ENCODE measurements at regions of chr14 and their contacts with region 1.

Region 1: DNA sequence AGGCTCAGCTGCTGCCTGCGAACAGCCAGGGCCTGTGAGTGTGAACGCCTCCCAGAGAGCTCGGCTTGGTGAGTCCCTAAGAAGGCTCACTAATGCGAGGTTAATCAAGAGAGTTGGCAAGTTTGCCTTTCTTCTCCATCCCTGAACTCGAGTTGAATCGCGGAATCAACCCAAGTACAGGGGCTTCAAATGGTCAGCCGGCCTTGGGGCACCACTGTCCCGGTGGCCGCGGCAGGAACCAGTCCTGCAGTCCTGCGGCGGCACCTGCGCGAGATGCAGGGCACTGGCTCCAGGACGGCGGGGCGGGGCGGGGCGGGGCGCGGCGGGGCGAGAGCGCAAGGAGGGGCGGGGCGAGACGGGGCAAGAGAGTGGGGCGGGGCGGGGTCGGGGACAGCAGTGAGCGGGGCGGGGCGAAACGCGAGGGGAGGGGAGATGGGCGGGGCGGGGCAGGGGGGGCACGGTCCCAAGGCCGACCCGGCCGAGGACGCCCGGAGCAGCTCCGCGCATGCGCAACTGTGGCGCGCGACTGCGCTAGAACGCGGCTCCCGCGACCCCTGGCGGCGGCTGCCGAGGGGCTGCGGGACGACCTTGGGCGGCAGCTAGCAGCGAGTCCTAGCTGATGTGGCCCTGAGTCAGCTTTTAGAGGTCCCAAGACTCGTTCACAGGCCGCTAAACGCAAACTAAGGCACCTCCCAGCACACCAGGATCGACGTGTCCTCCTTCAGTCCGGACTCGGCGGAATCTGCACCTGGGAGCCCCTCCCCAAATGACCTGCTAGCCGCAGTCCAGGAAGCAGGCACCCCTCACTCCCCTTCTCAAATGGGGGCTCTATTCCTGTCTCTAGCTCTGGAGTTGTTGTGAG is 58.0 kb downstream of the TTC7B start:
- DNase-seq: peak; percentile 96
- ATAC-seq: peak; percentile 85
- H3K4me3 ChIP-seq: peak overlapping the region; percentile 59 to 77 (median 66)
- H3K4me3 Mint-ChIP-seq: peak overlapping the region; percentile 82
- H3K27ac ChIP-seq: peak overlapping the region; percentile 71 to 79
- H3K27ac Mint-ChIP-seq: peak overlapping the region; percentile 66
- H3K4me1 ChIP-seq: peaks cover 22 to 29% of the 10 kb centered on the region in 2 donors
- H3K4me1 Mint-ChIP-seq: peaks cover 20% of the 10 kb centered on the region
- H3K27me3 ChIP-seq: no peaks in the 10 kb centered on the region
- H3K27me3 Mint-ChIP-seq: peaks cover 3% of the 10 kb centered on the region
- CTCF ChIP-seq: peak; percentile 78

Region 2: GRCh38 chr14:89701211-89702043 is 1056.8 kb before region 1 on chr14:
- CTCF ChIA-PET with region 1: no interaction called
- POLR2A ChIA-PET with region 1: no interaction called
- intact Hi-C with region 1: loop called (anchors 5 kb)
- DNase-seq: peak; percentile 90
- ATAC-seq: peak; percentile 96
- H3K4me3 ChIP-seq: peak overlapping the region; percentile 4 to 80 (median 62)
- H3K4me3 Mint-ChIP-seq: peak overlapping the region; percentile 88
- H3K27ac ChIP-seq: peak overlapping the region; percentile 28 to 71
- H3K27ac Mint-ChIP-seq: peak overlapping the region; percentile 85
- H3K4me1 ChIP-seq: peaks cover 25% of the 10 kb centered on the region in 2 donors
- H3K4me1 Mint-ChIP-seq: peaks cover 25% of the 10 kb centered on the region
- H3K27me3 ChIP-seq: no peaks in the 10 kb centered on the region
- H3K27me3 Mint-ChIP-seq: no peaks in the 10 kb centered on the region
- CTCF ChIP-seq: no peak

Region 3: DNA sequence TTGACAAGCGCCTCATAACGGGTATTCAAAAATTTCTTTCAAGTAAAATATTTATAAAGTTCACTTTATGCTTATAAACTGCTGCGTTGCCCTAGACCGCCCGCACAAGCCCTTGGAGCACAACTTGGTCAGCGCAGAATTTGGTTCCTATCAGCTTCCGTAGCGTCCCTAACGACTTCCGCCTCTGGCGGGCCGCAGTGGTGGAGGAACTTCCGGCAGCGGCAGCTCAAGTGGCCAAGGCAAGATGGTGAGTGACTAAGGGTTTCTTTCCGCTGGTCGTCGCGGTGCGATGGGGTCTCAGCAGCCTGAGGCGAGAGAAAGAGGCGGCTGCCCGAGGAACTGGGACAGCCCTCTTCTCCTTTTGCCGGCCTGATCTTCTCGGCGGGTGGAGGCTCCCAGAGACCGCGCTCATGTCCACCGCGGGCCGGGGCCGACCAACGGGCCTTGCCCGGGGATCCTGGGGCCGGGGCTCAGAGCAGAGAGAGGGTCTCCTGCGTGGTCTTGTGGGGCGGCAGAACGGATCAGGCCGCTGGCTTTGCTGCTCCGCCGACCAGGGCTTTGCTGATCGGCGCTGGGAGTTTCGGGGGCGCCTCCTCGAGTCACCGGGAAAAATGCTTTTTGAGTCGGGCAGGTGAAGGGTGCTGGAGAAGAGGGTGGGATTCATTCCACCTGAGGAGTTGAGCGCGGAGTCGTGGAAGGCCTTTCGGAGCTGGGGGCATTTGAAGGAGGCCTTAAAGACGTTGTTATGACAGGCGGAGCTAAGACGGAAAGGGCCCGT is 501.7 kb before region 1 on chr14 and contains the start of gene PSMC1:
- CTCF ChIA-PET with region 1: no interaction called
- POLR2A ChIA-PET with region 1: no interaction called
- intact Hi-C with region 1: loop called (anchors 1 kb)
- DNase-seq: peak; percentile 89
- ATAC-seq: peak; percentile 94
- H3K4me3 ChIP-seq: peak within 1 kb of the TSS; percentile 75 to 92 (median 81)
- H3K4me3 Mint-ChIP-seq: peak within 1 kb of the TSS; percentile 99
- H3K27ac ChIP-seq: peak within 1 kb of the TSS; percentile 34 to 82
- H3K27ac Mint-ChIP-seq: peak within 1 kb of the TSS; percentile 97
- H3K4me1 ChIP-seq: peaks cover 14 to 25% of the 10 kb centered on the region in 2 donors
- H3K4me1 Mint-ChIP-seq: peaks cover 38% of the 10 kb centered on the region
- H3K27me3 ChIP-seq: peaks cover 0 to 5% (median 2%) of the 10 kb centered on the region in 4 experiments
- H3K27me3 Mint-ChIP-seq: peaks cover 3% of the 10 kb centered on the region
- CTCF ChIP-seq: no peak
- total RNA-seq, gene PSMC1: 50.2 and 51.6 TPM in 2 replicates

Region 4: DNA sequence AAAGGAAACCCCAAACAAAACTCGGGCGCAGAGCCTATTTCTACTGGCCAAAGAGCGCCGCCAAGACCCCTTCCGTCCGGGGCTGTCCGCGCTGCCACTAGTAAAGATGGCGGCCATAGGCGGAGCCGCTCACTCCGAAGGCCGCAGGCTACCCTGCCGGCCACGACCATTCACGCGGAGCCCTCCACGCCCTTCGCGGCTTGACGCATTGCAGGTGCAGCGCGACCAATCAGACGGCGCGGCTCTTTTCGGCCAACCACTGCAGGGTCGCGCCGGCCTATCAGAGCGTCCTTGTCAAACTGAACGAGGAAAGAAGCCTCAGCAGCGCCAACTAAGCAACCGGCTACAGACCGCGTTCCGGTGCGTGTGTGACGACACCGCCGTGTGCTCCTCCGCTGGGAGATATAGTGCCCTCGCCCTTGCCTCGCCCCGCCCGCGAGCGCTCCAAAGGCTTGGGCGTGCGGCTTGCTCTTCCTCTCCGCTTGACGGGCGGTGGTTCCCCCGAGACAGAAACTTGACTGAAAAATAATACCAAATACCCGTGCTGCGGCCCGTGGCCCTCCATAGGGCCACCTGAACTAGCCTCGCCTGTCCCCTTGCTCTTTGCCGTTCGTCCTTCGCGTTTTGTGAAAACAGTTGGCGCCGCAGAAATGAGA is 375.1 kb before region 1 on chr14:
- CTCF ChIA-PET with region 1: interaction called, 6 read pairs
- POLR2A ChIA-PET with region 1: interaction called, 10 read pairs
- intact Hi-C with region 1: loop called (anchors 1 kb)
- DNase-seq: peak; percentile 99
- ATAC-seq: peak; percentile 91
- H3K4me3 ChIP-seq: peak overlapping the region; percentile 60 to 97 (median 92)
- H3K4me3 Mint-ChIP-seq: no peak overlapping the region
- H3K27ac ChIP-seq: peak overlapping the region; percentile 93 to 98
- H3K27ac Mint-ChIP-seq: no peak overlapping the region
- H3K4me1 ChIP-seq: peaks cover 15 to 24% of the 10 kb centered on the region in 2 donors
- H3K4me1 Mint-ChIP-seq: peaks cover 12% of the 10 kb centered on the region
- H3K27me3 ChIP-seq: no peaks in the 10 kb centered on the region
- H3K27me3 Mint-ChIP-seq: no peaks in the 10 kb centered on the region
- CTCF ChIP-seq: no peak

Region 5: GRCh38 chr14:90743425-90743824 is 14.8 kb before region 1 on chr14:
- CTCF ChIA-PET with region 1: interaction called, 25 read pairs
- POLR2A ChIA-PET with region 1: no interaction called
- intact Hi-C with region 1: no loop called
- DNase-seq: no peak
- ATAC-seq: no peak
- H3K4me3 ChIP-seq: no peak overlapping the region
- H3K4me3 Mint-ChIP-seq: no peak overlapping the region
- H3K27ac ChIP-seq: no peak overlapping the region
- H3K27ac Mint-ChIP-seq: no peak overlapping the region
- H3K4me1 ChIP-seq: no peaks in the 10 kb centered on the region
- H3K4me1 Mint-ChIP-seq: no peaks in the 10 kb centered on the region
- H3K27me3 ChIP-seq: no peaks in the 10 kb centered on the region
- H3K27me3 Mint-ChIP-seq: peaks cover under 1% of the 10 kb centered on the region
- CTCF ChIP-seq: no peak

Region 6: GRCh38 chr14:90827916-90828610 is 69.8 kb after region 1 on chr14:
- CTCF ChIA-PET with region 1: interaction called, 5 read pairs
- POLR2A ChIA-PET with region 1: no interaction called
- intact Hi-C with region 1: loop called (anchors 1 kb)
- DNase-seq: peak; percentile 92
- ATAC-seq: peak; percentile 100
- H3K4me3 ChIP-seq: peak overlapping the region; percentile 44 to 58 (median 51)
- H3K4me3 Mint-ChIP-seq: peak overlapping the region; percentile 77
- H3K27ac ChIP-seq: peak overlapping the region; percentile 61 to 75
- H3K27ac Mint-ChIP-seq: peak overlapping the region; percentile 80
- H3K4me1 ChIP-seq: peaks cover 13 to 16% of the 10 kb centered on the region in 2 donors
- H3K4me1 Mint-ChIP-seq: peaks cover 16% of the 10 kb centered on the region
- H3K27me3 ChIP-seq: no peaks in the 10 kb centered on the region
- H3K27me3 Mint-ChIP-seq: no peaks in the 10 kb centered on the region
- CTCF ChIP-seq: no peak

Measured in B cell (primary cell).